ENCODE measurements at regions of chr11 and their contacts with region 1.

Region 1: DNA sequence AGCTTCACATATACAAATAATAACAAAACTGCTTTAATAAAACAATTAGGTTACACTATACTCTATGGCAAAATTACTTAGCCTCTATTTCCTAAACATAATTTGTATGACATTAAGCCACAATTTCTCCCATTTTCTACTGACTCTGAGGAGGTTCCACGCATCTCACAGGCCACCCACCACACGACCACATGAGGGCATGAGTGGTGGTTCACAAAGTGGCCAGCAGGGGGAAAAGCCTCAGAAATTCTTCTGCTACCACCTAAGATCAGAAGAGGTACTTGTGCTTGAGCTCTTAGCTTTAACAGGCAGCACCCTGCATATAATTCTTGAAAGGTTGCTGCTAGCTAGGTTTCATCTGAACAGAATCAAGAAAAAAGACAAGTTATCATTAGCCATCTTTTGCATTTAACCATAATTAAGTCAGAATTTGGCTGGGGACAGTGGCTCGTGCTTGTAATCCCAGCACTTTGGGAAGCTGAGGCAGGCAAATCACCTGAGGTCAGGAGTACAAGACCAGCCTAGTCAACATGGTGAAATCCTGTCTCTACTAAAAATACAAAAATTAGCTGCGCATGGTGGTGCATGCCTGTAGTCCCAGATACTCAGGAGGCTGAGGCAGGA is 7.7 kb downstream of the LPXN start:
- DNase-seq: peak; percentile 76
- H3K4me3 ChIP-seq: no peak overlapping the region
- H3K27ac ChIP-seq: no peak overlapping the region
- H3K4me1 ChIP-seq: peaks cover 3% of the 10 kb centered on the region
- H3K27me3 ChIP-seq: no peaks in the 10 kb centered on the region
- CTCF ChIP-seq: peak; percentile 76 to 86
- POLR2A ChIP-seq: no peak

Region 2: GRCh38 chr11:58465690-58466089 is 102.3 kb before region 1 on chr11:
- CTCF ChIA-PET with region 1: no interaction called
- POLR2A ChIA-PET with region 1: no interaction called
- dilution Hi-C with region 1: no loop called
- intact Hi-C with region 1: no loop called
- DNase-seq: no peak
- H3K4me3 ChIP-seq: no peak overlapping the region
- H3K27ac ChIP-seq: no peak overlapping the region
- H3K4me1 ChIP-seq: no peaks in the 10 kb centered on the region
- H3K27me3 ChIP-seq: no peaks in the 10 kb centered on the region
- CTCF ChIP-seq: no peak
- POLR2A ChIP-seq: no peak

Region 3: DNA sequence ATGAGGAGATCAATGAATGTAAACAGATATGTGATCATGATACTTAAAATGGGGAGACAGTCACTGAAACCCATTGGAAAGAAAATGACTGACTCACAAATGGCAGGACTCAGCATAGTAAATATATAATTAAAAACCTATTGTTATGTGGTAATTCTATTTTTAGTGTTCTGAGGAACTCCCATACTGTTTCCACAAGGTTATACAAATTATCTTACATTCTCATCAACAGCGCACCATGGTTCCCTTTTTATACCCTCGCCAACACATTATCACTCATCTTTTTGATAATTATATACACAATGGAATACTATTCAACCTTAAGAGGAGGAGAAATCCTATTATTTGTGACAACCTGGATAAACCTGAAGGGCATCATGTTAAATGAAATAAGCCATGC is 77.2 kb before region 1 on chr11:
- CTCF ChIA-PET with region 1: no interaction called
- POLR2A ChIA-PET with region 1: no interaction called
- dilution Hi-C with region 1: no loop called
- intact Hi-C with region 1: no loop called
- DNase-seq: no peak
- H3K4me3 ChIP-seq: no peak overlapping the region
- H3K27ac ChIP-seq: no peak overlapping the region
- H3K4me1 ChIP-seq: no peaks in the 10 kb centered on the region
- H3K27me3 ChIP-seq: no peaks in the 10 kb centered on the region
- CTCF ChIP-seq: no peak
- POLR2A ChIP-seq: no peak

Region 4: DNA sequence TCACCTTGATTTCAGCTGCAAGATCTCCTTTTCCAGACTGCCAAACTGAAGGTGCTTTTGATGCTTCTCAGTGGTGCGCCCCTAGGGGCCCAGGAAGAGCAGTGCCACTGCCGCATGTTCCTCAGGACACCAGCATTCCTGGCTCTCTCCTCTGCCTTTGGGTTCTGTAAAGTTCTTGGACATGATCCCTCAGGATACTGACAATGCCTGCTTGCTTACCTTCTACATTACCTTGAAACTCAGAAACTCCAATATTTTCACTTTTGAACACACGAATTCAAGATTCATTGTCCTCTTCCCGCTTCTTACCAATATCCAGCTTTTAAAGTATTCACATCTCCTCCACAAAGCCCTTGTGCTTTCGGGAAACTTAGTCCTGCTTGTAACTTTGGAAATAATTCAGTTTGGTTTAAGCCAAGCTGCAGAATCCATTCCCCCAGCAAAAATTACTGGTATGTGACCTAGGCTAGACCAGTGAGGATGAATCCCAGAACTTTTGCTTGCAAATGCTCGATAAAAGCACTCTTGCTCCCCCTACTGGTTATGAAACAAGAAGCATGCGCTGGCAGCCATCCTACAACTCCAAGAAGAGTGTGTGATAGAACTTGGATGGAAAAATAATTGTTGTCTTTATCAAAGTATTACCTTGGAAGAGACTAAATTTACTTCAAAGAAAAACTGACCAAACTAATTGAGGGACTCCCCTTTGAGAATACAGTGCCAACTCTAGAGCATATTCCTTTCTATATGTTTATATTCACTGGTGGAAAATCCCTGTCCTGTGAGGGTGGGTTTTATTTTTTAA is 43.6 kb before region 1 on chr11:
- CTCF ChIA-PET with region 1: interaction called, 10 read pairs
- POLR2A ChIA-PET with region 1: no interaction called
- dilution Hi-C with region 1: no loop called
- intact Hi-C with region 1: no loop called
- DNase-seq: peak; percentile 85
- H3K4me3 ChIP-seq: no peak overlapping the region
- H3K27ac ChIP-seq: no peak overlapping the region
- H3K4me1 ChIP-seq: no peaks in the 10 kb centered on the region
- H3K27me3 ChIP-seq: peaks cover 11 to 12% of the 10 kb centered on the region in 2 experiments
- CTCF ChIP-seq: peak; percentile 62 to 84
- POLR2A ChIP-seq: no peak

Region 5: DNA sequence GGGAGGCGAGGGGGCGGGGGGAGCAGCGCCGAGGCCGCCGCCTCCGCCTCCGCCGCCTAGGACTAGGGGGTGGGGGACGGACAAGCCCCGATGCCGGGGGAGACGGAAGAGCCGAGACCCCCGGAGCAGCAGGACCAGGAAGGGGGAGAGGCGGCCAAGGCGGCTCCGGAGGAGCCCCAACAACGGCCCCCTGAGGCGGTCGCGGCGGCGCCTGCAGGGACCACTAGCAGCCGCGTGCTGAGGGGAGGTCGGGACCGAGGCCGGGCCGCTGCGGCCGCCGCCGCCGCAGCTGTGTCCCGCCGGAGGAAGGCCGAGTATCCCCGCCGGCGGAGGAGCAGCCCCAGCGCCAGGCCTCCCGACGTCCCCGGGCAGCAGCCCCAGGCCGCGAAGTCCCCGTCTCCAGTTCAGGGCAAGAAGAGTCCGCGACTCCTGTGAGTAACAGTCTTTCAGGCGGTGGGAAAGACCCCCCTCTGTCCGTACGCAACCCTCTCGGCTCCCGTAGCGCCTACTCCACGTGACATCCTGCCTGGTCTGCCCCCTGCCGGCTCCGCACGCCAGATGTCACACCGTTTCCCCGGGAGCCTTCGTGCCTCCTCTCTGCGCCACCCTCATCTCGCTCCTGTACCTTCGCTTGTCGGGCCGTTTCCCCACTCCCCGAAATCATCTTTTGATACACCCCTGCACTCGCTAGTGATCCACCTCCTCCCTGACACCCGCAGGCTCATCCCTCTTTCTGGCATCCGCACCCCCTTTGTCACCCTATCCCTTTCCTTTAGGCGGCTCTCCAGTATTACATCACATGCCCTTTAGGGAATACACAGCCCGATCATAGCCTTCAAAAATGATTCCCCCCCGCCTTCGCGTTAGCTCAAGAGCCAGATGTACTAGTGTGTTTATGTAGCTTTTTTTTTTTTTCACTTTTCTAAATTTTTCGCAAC is 11.5 kb after region 1 on chr11:
- CTCF ChIA-PET with region 1: interaction called, 62 read pairs
- POLR2A ChIA-PET with region 1: interaction called, 3 read pairs
- dilution Hi-C with region 1: no loop called
- intact Hi-C with region 1: no loop called
- DNase-seq: peak; percentile 88
- H3K4me3 ChIP-seq: peak overlapping the region; percentile 59 to 92 (median 76)
- H3K27ac ChIP-seq: peak overlapping the region; percentile 95
- H3K4me1 ChIP-seq: peaks cover 38% of the 10 kb centered on the region
- H3K27me3 ChIP-seq: no peaks in the 10 kb centered on the region
- CTCF ChIP-seq: peak; percentile 84 to 92
- POLR2A ChIP-seq: peak; percentile 97

Region 6: GRCh38 chr11:58606930-58607714 is 39.1 kb after region 1 on chr11:
- CTCF ChIA-PET with region 1: interaction called, 13 read pairs
- POLR2A ChIA-PET with region 1: no interaction called
- dilution Hi-C with region 1: no loop called
- intact Hi-C with region 1: no loop called
- DNase-seq: no peak
- H3K4me3 ChIP-seq: no peak overlapping the region
- H3K27ac ChIP-seq: no peak overlapping the region
- H3K4me1 ChIP-seq: peaks cover 4% of the 10 kb centered on the region
- H3K27me3 ChIP-seq: no peaks in the 10 kb centered on the region
- CTCF ChIP-seq: no peak
- POLR2A ChIP-seq: no peak

Region 7: GRCh38 chr11:58675334-58676155 is 107.5 kb after region 1 on chr11:
- CTCF ChIA-PET with region 1: interaction called, 17 read pairs
- POLR2A ChIA-PET with region 1: no interaction called
- dilution Hi-C with region 1: no loop called
- intact Hi-C with region 1: loop called (anchors 2 kb)
- DNase-seq: peak; percentile 49
- H3K4me3 ChIP-seq: no peak overlapping the region
- H3K27ac ChIP-seq: no peak overlapping the region
- H3K4me1 ChIP-seq: no peaks in the 10 kb centered on the region
- H3K27me3 ChIP-seq: no peaks in the 10 kb centered on the region
- CTCF ChIP-seq: peak; percentile 94 to 95
- POLR2A ChIP-seq: no peak

Region 8: DNA sequence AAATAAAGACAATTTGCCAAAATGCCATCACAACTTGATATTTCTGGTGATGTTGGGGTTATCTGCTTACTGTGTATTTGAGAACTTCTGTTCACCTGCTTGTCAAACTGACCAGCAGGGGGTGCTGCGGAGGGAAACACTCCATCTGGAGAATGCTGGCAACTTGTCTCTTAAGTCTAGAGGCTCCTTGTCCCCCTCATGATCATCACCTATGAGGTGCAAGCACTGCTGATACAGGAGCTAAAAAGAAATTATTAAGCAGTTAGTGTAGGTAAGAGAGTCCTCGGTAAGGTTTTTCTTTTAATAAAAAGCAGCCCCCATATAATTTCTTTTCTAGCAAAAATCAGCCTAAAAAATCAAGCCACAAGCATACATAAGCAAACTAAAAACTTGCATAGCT is 485.4 kb after region 1 on chr11:
- CTCF ChIA-PET with region 1: interaction called, 10 read pairs
- POLR2A ChIA-PET with region 1: no interaction called
- dilution Hi-C with region 1: no loop called
- intact Hi-C with region 1: no loop called
- DNase-seq: peak; percentile 59
- H3K4me3 ChIP-seq: no peak overlapping the region
- H3K27ac ChIP-seq: no peak overlapping the region
- H3K4me1 ChIP-seq: no peaks in the 10 kb centered on the region
- H3K27me3 ChIP-seq: peaks cover 2 to 4% of the 10 kb centered on the region in 2 experiments
- CTCF ChIP-seq: peak; percentile 69 to 74
- POLR2A ChIP-seq: no peak

Measured in endothelial cell of umbilical vein (primary cell).